ENCODE measurements at regions of chr17 and their contacts with region 1.

Region 1: DNA sequence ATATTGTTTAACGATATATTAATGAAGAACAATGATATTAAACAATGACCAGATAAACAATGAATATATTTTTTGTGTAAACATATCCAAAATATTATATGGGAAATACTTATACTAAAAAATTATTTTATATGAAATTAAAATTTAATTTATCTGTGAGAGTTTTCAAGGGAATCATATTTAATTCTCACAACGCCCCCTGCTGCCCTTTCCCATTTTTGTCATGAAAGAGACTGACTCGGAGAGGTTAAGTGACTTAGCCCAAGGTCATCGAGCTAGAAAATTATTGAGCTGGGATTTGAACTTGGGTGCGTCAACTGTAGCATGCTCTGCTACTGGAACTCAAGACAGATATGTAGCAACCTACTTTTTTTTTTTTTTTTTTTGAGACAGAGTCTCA is 7.2 kb upstream of the MYCBPAP start:
- DNase-seq: no peak
- CTCF ChIP-seq: no peak

Region 2: GRCh38 chr17:50027631-50028206 is 473.3 kb before region 1 on chr17:
- CTCF ChIA-PET with region 1: no interaction called
- POLR2A ChIA-PET with region 1: no interaction called
- DNase-seq: no peak
- CTCF ChIP-seq: no peak

Region 3: DNA sequence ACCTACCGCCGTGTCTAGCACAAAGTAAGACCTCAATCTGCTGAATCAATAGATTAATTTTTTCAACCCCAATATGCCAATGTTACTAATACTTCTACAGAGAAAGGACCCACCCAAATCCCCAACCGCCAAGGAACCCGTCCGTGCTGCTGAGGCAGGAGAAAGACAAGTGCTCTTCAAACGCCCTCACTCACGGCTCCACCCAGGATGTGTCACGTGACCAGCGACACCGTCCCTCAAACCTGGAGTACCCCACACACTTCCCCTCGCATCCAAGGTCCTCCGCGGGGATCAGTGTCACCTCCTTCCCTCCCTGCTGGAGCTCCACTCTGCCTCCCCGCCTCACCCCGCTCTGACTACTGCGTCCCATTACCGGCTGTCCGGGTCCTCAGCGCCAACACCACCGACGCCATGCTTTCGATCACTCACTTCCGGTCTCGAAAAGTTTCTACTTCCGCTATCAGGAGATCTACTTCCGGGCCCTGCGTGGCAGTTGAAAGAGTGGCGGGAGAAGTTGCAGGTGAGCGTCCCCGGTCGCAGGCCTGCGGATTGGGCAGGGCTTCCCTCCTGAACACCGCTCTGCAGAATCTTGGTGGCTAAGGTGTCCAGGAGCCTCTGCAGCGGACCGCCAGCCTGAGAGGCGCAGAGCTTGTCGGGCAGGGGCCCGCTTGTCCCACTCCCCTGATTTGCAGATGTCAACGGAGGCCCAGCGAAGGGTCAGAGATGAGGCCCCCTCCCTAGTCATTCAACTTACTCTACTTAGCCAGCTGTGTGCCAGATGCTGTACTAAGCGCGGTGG is 128.1 kb before region 1 on chr17 and contains the starts of genes EME1 and MRPL27:
- CTCF ChIA-PET with region 1: no interaction called
- POLR2A ChIA-PET with region 1: no interaction called
- DNase-seq: peak; percentile 92
- CTCF ChIP-seq: no peak

Region 4: DNA sequence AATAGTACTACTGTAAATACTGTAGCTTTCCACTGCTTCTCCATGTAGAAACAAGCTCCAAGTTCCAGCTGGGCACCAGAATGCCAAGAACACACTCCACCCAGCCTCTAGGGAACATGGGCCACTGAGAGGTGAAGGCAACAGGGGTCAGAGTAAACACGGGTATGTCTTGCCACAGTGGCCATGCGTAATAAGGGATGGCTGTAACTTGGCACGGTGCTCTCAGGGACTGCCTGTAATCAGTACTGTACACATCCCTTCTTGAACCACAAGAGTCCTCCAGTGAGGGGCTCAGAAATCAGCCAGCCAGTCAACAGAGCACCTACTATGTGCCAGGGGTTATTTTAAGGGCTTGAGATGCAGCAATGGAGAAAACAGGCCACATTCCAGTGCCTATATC is 114.5 kb before region 1 on chr17:
- CTCF ChIA-PET with region 1: no interaction called
- POLR2A ChIA-PET with region 1: no interaction called
- DNase-seq: no peak
- CTCF ChIP-seq: no peak

Region 5: DNA sequence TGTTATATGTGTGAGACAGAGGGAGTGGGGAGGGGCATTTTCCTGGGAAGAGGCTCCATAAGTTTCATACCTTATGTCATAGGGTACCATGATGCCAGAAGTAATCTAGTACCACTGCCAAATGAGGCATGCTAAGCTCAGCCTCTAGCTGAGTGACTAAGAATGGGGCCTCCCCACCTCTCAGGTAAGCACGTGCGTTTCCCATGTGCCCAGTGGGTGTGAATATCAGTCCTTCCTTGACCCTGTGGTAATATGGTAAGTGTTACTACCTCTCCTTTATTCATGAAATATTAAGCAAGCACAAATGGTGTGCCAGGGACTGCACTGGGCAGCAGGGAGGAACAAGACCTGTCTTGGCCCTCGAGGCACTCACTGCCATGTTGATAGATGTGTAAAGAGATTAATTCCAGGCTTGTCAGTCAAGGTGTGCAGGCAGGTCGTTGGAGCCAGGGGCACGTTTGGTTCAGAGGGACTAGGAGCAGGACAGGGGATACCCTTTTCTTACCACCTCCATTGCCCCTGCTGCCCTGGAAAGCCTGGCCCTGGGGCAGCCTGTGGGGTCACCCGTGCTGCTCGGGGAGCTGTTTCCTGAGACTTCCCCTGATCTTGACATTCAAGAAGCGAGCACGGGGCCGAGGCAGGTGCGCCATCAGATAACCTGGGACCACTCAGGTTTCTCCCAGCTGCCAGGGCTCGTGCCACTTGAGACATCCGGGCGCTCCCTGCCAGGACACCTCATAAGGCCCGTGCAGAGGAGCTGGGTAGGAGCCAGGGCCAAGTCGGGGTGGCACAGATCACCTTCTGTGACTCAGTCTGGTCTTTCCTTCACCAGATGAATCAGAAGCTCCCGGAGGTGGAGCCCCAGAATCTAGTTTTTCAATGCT is 13.6 kb before region 1 on chr17:
- CTCF ChIA-PET with region 1: interaction called, 35 read pairs
- POLR2A ChIA-PET with region 1: no interaction called
- DNase-seq: no peak
- CTCF ChIP-seq: no peak